ENCODE measurements at regions of chr1 and their contacts with region 1.

Region 1: DNA sequence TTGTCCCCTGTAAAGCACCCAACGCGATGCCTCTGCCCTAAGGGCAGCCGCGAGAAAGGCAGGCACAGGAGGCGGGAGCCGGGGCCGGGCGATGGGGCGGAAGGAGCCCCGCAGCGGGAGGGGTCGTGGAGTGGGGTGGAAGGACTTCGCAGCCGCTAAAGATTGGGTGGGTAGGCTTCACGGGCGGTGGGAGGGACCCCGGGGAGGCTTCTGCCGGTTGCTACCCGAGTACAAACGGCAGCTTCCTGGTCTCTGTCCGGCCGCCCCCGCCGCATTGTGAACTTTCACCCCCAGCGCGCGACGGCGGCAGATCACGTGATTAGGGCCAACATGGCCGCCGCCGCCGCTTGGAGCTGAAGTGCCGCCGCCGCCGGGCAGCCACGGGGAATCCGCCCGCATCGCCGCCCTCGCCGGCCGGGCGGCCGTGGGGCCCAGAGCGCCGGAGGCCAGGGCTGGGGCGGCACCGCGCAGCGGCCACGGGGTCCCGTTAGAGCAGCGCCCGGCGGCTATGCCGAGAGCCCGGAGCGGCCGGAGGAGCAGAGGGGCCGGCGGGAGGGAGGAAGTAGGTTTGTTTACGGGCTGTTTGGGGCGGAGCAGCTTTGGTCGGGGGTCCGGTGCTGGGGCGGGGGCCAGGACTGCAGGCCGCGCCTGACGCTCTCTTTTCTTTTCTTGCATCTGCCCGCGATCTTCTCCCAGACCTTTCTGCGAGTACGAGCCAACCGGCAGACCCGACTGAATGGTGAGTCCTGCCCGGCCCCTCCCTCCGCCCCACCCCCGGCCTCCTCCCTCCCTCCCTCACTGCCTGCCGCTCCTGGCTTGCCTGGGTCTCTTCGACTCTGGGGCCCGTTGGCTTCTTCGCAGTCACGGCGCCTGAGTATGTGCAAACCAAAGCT is 42.4 kb downstream of the TMEM53 start:
- DNase-seq: peak; percentile 93
- H3K4me3 Mint-ChIP-seq: peak overlapping the region; percentile 90
- H3K27ac Mint-ChIP-seq: peak overlapping the region; percentile 93
- H3K4me1 Mint-ChIP-seq: peaks cover 40% of the 10 kb centered on the region
- H3K27me3 Mint-ChIP-seq: no peaks in the 10 kb centered on the region

Region 2: GRCh38 chr1:44213222-44214112 is 418.4 kb before region 1 on chr1 and contains the start of gene DMAP1:
- CTCF ChIA-PET with region 1: interaction called, 5 read pairs
- POLR2A ChIA-PET with region 1: interaction called, 14 read pairs
- DNase-seq: peak; percentile 88
- H3K4me3 Mint-ChIP-seq: peak within 1 kb of the TSS; percentile 96
- H3K27ac Mint-ChIP-seq: peak within 1 kb of the TSS; percentile 90
- H3K4me1 Mint-ChIP-seq: peaks cover 36% of the 10 kb centered on the region
- H3K27me3 Mint-ChIP-seq: no peaks in the 10 kb centered on the region
- total RNA-seq, gene DMAP1: 39.6 to 40.2 TPM

Region 3: GRCh38 chr1:44557778-44558177 is 74.1 kb before region 1 on chr1:
- CTCF ChIA-PET with region 1: no interaction called
- POLR2A ChIA-PET with region 1: interaction called, 12 read pairs
- DNase-seq: no peak
- H3K4me3 Mint-ChIP-seq: no peak overlapping the region
- H3K27ac Mint-ChIP-seq: no peak overlapping the region
- H3K4me1 Mint-ChIP-seq: peaks cover 19% of the 10 kb centered on the region
- H3K27me3 Mint-ChIP-seq: peaks cover 31% of the 10 kb centered on the region

Region 4: GRCh38 chr1:44645476-44646244 is 13.8 kb after region 1 on chr1:
- CTCF ChIA-PET with region 1: interaction called, 65 read pairs
- POLR2A ChIA-PET with region 1: interaction called, 60 read pairs
- DNase-seq: no peak
- H3K4me3 Mint-ChIP-seq: no peak overlapping the region
- H3K27ac Mint-ChIP-seq: no peak overlapping the region
- H3K4me1 Mint-ChIP-seq: no peaks in the 10 kb centered on the region
- H3K27me3 Mint-ChIP-seq: no peaks in the 10 kb centered on the region

Region 5: DNA sequence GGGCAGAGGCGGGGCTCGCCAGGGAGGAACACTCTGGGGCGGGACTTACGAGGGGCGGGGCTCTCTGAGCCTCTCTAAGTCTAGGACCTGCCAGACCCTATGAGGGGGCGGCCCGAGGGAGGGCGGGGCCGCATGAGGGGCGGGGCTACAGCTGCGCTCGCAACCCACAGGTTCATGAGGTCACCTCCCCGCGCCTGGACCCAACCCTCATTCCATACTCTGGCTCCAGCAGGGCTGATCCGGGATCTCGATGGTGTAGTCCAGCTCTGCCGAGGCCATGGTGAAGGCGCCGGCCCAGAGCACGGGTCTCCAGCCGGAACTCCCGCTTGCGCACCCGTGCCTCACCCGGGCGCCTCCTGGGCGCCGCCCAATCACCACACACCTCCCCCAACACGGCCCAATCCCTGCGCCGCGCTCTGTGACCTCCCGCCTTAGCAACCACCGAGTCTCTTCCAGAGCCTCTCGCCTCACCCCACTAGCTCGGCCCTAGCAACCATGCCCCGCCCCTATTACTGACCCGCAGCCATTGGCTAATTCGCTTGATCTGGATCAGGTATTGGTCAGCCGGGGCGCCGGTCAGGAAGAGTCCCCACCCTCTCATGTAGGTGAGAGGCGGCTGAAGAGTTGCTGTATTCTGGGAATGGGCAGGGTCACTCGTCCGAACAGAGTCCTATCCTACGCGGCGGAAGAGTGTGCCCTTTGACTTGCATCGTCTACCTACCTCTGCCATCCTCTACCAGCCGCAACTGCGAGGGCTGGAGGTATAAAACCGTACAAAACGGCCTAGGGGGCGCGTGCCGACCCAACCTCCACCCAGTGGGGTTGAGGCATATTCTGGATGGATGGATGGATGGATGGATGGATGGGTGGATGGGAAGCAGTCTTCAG is 42.5 kb after region 1 on chr1 and contains the starts of genes ARMH1 and TMEM53:
- CTCF ChIA-PET with region 1: interaction called, 9 read pairs
- POLR2A ChIA-PET with region 1: interaction called, 71 read pairs
- DNase-seq: peak; percentile 99
- H3K4me3 Mint-ChIP-seq: peak within 1 kb of the TSS; percentile 83
- H3K27ac Mint-ChIP-seq: peak within 1 kb of the TSS; percentile 79
- H3K4me1 Mint-ChIP-seq: peaks cover 32% of the 10 kb centered on the region
- H3K27me3 Mint-ChIP-seq: no peaks in the 10 kb centered on the region
- total RNA-seq, gene ARMH1: 20.8 to 21.2 TPM
- total RNA-seq, gene TMEM53: 4.3 to 5.6 TPM

Region 6: GRCh38 chr1:45442272-45442671 is 810.4 kb after region 1 on chr1:
- CTCF ChIA-PET with region 1: no interaction called
- POLR2A ChIA-PET with region 1: no interaction called
- DNase-seq: no peak
- H3K4me3 Mint-ChIP-seq: no peak overlapping the region
- H3K27ac Mint-ChIP-seq: no peak overlapping the region
- H3K4me1 Mint-ChIP-seq: no peaks in the 10 kb centered on the region
- H3K27me3 Mint-ChIP-seq: no peaks in the 10 kb centered on the region